ENCODE measurements at regions of chr1 and their contacts with region 1.

Region 1: GRCh38 chr1:41662061-41662764 is 177.7 kb upstream of the EDN2 start:
- DNase-seq: peak; percentile 87

Region 2: DNA sequence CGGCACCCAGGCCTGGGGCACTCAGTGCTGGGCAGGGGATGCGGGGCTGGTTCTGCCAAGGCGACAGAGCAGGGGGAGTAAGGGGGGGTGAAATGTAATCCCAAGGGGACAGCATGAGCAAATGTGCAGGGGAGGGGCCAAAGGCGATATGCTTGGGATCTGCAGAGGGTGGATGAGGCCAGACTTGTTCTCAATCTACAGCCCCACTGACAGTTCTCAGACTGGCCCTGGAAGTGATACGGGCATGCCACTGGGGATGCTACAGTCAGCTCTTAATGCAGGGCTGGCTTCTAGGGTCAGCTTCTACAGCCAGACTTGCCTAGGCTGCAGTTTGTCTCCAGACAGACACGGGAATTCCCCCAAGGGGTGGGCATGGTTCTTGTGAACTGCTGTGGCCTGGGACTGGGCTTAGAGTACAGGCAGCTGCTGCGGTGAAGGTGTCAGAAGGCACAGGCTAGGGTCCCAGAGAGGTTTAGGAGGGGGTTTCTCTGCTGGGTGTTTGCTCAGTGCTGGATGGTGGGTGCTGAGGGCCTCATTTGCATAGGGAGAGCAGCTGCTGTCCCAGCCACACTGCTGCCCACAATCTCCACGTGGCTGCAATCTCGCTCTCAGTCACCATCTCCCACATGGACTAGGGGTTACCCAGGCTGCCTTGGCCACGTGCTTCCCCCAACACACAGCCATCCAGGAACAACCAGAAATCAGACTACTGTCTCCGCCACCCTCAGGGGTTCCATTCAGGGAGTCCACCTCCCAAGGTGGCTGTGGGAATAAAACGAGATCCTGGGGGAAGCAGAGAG is 66.4 kb after region 1 on chr1:
- intact Hi-C with region 1: loop called (anchors 5 kb)
- DNase-seq: no peak

Region 3: DNA sequence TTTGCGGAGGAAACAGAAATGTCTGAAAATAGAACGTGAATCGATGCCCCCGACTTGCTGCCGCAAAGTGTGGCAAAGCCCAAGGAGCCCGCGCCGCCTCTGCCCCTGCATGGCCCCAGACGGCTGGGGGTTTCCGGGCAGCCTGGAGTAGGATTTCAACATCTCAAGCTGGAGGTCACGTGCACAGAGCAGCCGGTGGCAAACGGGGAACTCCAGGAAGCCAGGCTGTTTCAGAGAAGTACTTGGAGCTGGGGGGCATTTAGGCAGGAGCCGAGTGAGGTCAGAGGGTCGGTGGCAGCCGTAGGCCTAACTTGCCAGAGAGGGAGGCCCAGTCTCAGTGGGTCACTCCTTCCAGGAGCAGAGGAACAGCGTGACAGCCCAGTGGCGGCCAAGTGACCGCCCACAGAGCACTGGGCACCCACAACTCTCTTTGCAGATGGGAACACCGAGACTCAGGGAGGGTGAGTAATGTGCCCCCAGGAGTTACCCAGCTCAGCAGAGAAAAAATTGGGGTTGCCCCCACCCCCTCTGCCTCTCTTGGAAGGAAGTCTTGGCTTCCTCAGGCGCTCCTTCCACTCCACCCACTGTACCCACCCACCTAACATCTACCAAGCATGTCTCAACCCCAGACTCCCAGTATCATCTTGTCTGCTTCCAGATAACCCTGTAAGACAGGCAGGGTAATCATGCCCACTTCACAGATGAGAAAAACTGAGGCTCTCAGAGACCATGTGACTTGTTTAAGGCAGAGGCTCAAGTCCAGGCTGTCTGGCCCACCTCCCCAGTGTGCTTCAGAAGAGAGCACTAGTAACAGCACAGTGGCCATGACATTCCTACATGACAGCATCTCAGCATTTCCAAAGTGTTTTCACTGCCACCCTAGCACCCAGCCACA is 77.1 kb after region 1 on chr1:
- intact Hi-C with region 1: loop called (anchors 2 kb)
- DNase-seq: peak; percentile 95

Region 4: GRCh38 chr1:42035830-42036604 is 373.8 kb after region 1 on chr1:
- intact Hi-C with region 1: loop called (anchors 10 kb)
- DNase-seq: peak; percentile 97